GM12878 (cell line): ENCODE measurements at regions of chrX and their contacts with region 1.

Region 1: GRCh38 chrX:112211459-112211858 is 128.9 kb upstream of the TRPC5 start:
- DNase-seq: peak; percentile 11
- ATAC-seq: peak; percentile 85
- H3K4me3 ChIP-seq: no peak overlapping the region
- H3K27ac ChIP-seq: no peak overlapping the region
- H3K4me1 ChIP-seq: no peaks in the 10 kb centered on the region
- H3K27me3 ChIP-seq: no peaks in the 10 kb centered on the region
- CTCF ChIP-seq: no peak
- EP300 ChIP-seq: no peak
- POLR2A ChIP-seq: no peak
- RAD21 ChIP-seq: no peak

Region 2: GRCh38 chrX:112147206-112147605 is 64.3 kb before region 1 on chrX:
- CTCF ChIA-PET with region 1: no interaction called
- POLR2A ChIA-PET with region 1: no interaction called
- RAD21 ChIA-PET with region 1: no interaction called
- SMC1A ChIA-PET with region 1: no interaction called
- in situ Hi-C with region 1: no loop called
- intact Hi-C with region 1: no loop called
- DNase-seq: no peak
- ATAC-seq: peak; percentile 69
- H3K4me3 ChIP-seq: no peak overlapping the region
- H3K27ac ChIP-seq: no peak overlapping the region
- H3K4me1 ChIP-seq: no peaks in the 10 kb centered on the region
- H3K27me3 ChIP-seq: no peaks in the 10 kb centered on the region
- CTCF ChIP-seq: peak; percentile 47 to 65 (median 51); a peak in 5 of 6 replicates
- EP300 ChIP-seq: no peak
- POLR2A ChIP-seq: no peak
- RAD21 ChIP-seq: peak; percentile 49

Region 3: GRCh38 chrX:112223391-112223790 is 11.9 kb after region 1 on chrX:
- CTCF ChIA-PET with region 1: no interaction called
- POLR2A ChIA-PET with region 1: no interaction called
- RAD21 ChIA-PET with region 1: no interaction called
- SMC1A ChIA-PET with region 1: interaction called, 16 read pairs
- in situ Hi-C with region 1: no loop called
- intact Hi-C with region 1: no loop called
- DNase-seq: no peak
- ATAC-seq: no peak
- H3K4me3 ChIP-seq: no peak overlapping the region
- H3K27ac ChIP-seq: no peak overlapping the region
- H3K4me1 ChIP-seq: no peaks in the 10 kb centered on the region
- H3K27me3 ChIP-seq: no peaks in the 10 kb centered on the region
- CTCF ChIP-seq: no peak
- EP300 ChIP-seq: no peak
- POLR2A ChIP-seq: no peak
- RAD21 ChIP-seq: no peak

Region 4: GRCh38 chrX:112233164-112233563 is 21.7 kb after region 1 on chrX:
- CTCF ChIA-PET with region 1: interaction called, 3 read pairs
- POLR2A ChIA-PET with region 1: no interaction called
- RAD21 ChIA-PET with region 1: no interaction called
- SMC1A ChIA-PET with region 1: interaction called, 10 read pairs
- in situ Hi-C with region 1: no loop called
- intact Hi-C with region 1: no loop called
- DNase-seq: peak; percentile 12
- ATAC-seq: peak; percentile 83
- H3K4me3 ChIP-seq: no peak overlapping the region
- H3K27ac ChIP-seq: no peak overlapping the region
- H3K4me1 ChIP-seq: no peaks in the 10 kb centered on the region
- H3K27me3 ChIP-seq: no peaks in the 10 kb centered on the region
- CTCF ChIP-seq: no peak
- EP300 ChIP-seq: no peak
- POLR2A ChIP-seq: no peak
- RAD21 ChIP-seq: no peak

Region 5: GRCh38 chrX:112313201-112313600 is 101.7 kb after region 1 on chrX:
- CTCF ChIA-PET with region 1: no interaction called
- POLR2A ChIA-PET with region 1: no interaction called
- RAD21 ChIA-PET with region 1: no interaction called
- SMC1A ChIA-PET with region 1: no interaction called
- in situ Hi-C with region 1: no loop called
- intact Hi-C with region 1: no loop called
- DNase-seq: no peak
- ATAC-seq: no peak
- H3K4me3 ChIP-seq: no peak overlapping the region
- H3K27ac ChIP-seq: no peak overlapping the region
- H3K4me1 ChIP-seq: no peaks in the 10 kb centered on the region
- H3K27me3 ChIP-seq: no peaks in the 10 kb centered on the region
- CTCF ChIP-seq: no peak
- EP300 ChIP-seq: no peak
- POLR2A ChIP-seq: no peak
- RAD21 ChIP-seq: no peak